ENCODE measurements at regions of chr16 and their contacts with region 1.

Region 1: DNA sequence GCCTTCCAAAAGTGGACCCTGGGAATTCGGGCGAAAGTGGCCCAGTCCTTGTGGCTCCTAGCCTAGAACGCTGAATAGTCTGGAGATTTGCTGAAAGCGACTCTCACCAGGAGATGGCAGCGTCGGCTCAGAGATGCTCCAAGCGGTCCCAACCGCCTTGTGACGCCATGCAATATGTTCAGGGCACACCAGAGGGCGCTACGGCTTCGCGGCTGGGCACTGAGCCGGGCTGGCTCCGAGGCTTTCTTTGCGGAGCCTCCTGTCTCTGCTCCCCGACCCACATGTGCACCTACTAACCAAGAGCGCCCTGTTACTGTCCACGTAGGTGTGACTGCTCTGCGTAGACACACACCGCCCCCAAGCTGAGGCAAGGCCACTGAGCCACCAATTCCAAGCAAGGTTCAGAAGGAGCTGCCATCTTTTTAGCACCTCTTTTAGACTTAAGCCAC is 36.9 kb downstream of the SYCE1L start:
- DNase-seq: peak; percentile 85
- CTCF ChIP-seq: peak; percentile 99

Region 2: DNA sequence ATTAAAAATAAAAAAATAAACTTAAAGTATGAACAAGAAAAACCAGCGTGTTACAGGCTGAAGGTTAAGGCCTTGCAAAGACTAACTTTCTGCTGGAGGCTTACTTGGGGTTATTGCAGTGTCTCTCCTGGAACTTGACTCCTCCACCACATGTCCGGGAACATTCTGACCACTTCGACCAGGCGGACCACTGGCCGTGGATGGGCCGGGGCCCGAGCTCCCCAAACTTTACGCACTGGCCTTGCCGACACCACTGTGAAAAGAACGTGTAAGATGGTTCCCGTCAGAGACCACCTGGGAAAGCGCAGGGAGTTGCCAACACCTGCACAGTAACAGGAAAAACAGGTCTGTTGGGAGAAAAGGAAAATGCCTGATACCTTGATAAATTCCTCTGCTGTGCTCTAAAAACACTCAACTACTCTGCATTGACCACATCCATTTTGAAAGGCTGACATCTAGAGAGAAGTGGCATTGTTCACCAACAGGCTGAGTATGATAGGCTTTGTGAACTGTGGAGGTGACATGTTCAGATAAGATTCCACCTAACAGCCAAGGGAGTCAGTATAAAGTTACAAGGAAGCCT is 99.7 kb after region 1 on chr16:
- in situ Hi-C with region 1: no loop called
- DNase-seq: no peak
- CTCF ChIP-seq: no peak

Region 3: DNA sequence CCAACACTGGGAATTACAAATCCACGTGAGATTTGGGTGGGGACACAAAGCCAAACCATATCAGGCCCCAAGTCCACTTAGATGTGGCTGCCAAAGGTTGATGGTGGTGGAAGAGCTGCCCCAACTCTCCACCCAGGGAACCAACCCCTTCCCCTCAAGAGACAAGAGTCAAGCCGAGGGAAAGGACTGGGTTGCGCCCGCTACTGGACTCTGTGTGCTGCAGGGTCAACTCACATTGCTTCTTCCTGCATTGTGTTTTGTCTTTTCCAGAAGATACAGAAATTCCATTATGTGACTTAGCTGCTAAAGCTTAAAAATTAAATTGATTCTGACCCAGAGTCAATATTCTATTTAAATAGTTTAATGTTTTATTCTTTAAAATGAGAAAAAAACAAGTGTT is 140.3 kb after region 1 on chr16:
- in situ Hi-C with region 1: loop called (anchors 10 kb)
- DNase-seq: peak; percentile 23
- CTCF ChIP-seq: peak; percentile 36

Region 4: DNA sequence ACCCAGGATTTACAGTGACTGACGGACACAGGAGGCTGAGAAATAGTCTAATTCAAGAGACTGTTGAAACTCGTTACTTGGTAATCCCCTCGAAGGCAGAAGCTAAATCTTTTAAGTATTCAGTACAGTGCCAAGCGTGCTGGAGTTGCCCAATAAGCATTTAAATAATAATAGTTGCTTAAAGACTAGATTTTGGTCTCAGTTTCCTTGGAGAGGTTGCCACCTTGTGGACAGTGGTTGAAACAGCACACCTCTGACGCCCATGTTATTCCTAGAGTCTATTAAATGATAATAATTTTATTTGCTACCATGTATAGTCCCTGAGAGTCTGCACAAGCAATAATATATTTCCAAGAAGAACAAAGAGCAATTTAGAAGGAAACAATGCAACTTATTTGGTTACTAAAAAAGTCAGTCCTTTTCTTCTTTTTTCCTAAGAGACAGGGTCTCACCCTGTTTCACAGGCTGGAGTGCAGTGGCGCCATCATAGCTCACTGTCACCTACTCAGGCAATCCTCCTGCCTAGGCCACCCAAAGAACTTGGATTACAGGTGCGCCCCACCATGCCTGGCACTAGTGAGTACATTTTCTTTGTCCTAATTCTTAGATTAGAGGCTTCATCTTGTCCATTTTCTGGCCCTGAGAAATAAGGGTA is 348.2 kb after region 1 on chr16:
- in situ Hi-C with region 1: loop called (anchors 5 kb)
- DNase-seq: peak; percentile 50
- CTCF ChIP-seq: peak; percentile 59

Region 5: GRCh38 chr16:77971306-77972271 is 735.5 kb after region 1 on chr16:
- in situ Hi-C with region 1: loop called (anchors 25 kb)
- DNase-seq: peak; percentile 72
- CTCF ChIP-seq: peak; percentile 78